Colonic mucosa (tissue), 4 donors: ENCODE measurements at regions of chr3 and their contacts with region 1.

Region 1: GRCh38 chr3:155805802-155806618 is at the start of gene C3orf33:
- DNase-seq: peak; percentile 75
- H3K4me3 ChIP-seq: peak within 1 kb of the TSS; percentile 82
- H3K27ac ChIP-seq: peak within 1 kb of the TSS; percentile 56
- H3K4me1 ChIP-seq: no peaks in the 10 kb centered on the region
- H3K27me3 ChIP-seq: no peaks in the 10 kb centered on the region
- CTCF ChIP-seq: peak; percentile 82
- total RNA-seq, gene C3orf33: 2.4 to 2.8 TPM

Region 2: GRCh38 chr3:154718053-154718452 is 1088.0 kb before region 1 on chr3:
- intact Hi-C with region 1: no loop called
- DNase-seq: no peak
- H3K4me3 ChIP-seq: no peak overlapping the region
- H3K27ac ChIP-seq: no peak overlapping the region
- H3K4me1 ChIP-seq: no peaks in the 10 kb centered on the region
- H3K27me3 ChIP-seq: no peaks in the 10 kb centered on the region
- CTCF ChIP-seq: no peak

Region 3: GRCh38 chr3:155859859-155860258 is 53.8 kb after region 1 on chr3:
- intact Hi-C with region 1: loop called (anchors 10 kb)
- DNase-seq: no peak
- H3K4me3 ChIP-seq: no peak overlapping the region
- H3K27ac ChIP-seq: no peak overlapping the region
- H3K4me1 ChIP-seq: no peaks in the 10 kb centered on the region
- H3K27me3 ChIP-seq: no peaks in the 10 kb centered on the region
- CTCF ChIP-seq: no peak

Region 4: DNA sequence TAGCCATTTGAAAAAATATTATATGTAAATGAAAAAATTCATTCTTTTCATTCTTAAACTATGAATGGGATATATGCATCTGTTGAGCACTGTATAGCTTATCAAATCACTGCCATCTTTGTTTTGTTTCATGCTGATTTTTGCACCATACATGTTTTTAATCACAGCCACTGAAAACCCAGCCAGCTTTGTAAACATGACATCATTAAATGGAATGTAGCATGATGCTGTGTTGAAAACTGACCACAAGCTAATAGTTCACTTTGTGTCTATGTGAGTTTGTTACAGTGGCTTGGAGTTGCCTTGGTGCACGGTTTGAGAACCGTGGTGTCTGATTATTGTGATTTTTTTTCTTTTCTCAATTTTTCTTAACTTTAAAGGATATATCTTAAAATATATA is 140.2 kb after region 1 on chr3:
- intact Hi-C with region 1: loop called (anchors 10 kb)
- DNase-seq: no peak
- H3K4me3 ChIP-seq: no peak overlapping the region
- H3K27ac ChIP-seq: no peak overlapping the region
- H3K4me1 ChIP-seq: no peaks in the 10 kb centered on the region
- H3K27me3 ChIP-seq: no peaks in the 10 kb centered on the region
- CTCF ChIP-seq: no peak

Region 5: DNA sequence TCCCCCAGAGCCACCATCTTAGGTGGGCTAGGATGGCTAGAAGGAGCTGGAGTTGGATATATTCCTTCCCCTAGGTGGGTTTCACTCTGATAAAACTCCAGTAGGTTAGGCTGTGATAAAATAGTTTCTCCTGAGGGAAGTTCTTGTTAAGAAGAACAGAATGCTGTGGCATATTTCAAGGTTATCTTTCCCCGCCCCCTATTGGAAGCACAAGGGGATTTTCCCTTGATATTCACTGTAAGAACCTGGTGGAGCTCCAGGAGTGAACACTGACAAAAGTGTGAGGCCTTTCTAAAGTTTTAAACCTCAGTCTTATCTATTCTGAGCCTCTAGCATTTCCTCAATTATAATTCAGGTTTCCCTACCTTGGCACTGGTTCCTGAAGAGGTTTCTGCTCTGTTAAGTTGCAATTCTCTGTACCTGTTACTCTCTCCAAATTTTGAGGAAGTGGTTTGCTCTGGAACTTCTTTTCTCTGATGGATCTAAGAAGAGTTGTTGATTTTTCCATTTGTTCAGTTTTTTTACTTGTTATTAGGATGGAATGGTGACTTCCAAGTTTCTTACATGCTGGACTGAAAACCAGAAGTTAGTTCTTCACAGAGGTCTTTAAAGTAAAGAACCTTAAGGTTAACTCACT is 177.9 kb after region 1 on chr3:
- intact Hi-C with region 1: no loop called
- DNase-seq: no peak
- H3K4me3 ChIP-seq: no peak overlapping the region
- H3K27ac ChIP-seq: no peak overlapping the region
- H3K4me1 ChIP-seq: no peaks in the 10 kb centered on the region
- H3K27me3 ChIP-seq: no peaks in the 10 kb centered on the region
- CTCF ChIP-seq: no peak